ENCODE measurements at regions of chr9 and their contacts with region 1.

Region 1: GRCh38 chr9:347667-348292 is 133.1 kb downstream of the DOCK8 start:
- DNase-seq: peak; percentile 71
- ATAC-seq: peak; percentile 66
- H3K4me3 ChIP-seq: no peak overlapping the region
- H3K27ac ChIP-seq: no peak overlapping the region
- H3K4me1 ChIP-seq: no peaks in the 10 kb centered on the region
- H3K27me3 ChIP-seq: no peaks in the 10 kb centered on the region
- CTCF ChIP-seq: peak; percentile 84

Region 2: GRCh38 chr9:378263-378662 is 30.5 kb after region 1 on chr9:
- CTCF ChIA-PET with region 1: no interaction called
- POLR2A ChIA-PET with region 1: no interaction called
- intact Hi-C with region 1: loop called (anchors 1 kb)
- DNase-seq: no peak
- ATAC-seq: no peak
- H3K4me3 ChIP-seq: no peak overlapping the region
- H3K27ac ChIP-seq: no peak overlapping the region
- H3K4me1 ChIP-seq: no peaks in the 10 kb centered on the region
- H3K27me3 ChIP-seq: no peaks in the 10 kb centered on the region
- CTCF ChIP-seq: no peak

Region 3: GRCh38 chr9:1009101-1009707 is 661.4 kb after region 1 on chr9:
- CTCF ChIA-PET with region 1: no interaction called
- POLR2A ChIA-PET with region 1: no interaction called
- intact Hi-C with region 1: loop called (anchors 5 kb)
- DNase-seq: peak; percentile 90
- ATAC-seq: peak; percentile 97
- H3K4me3 ChIP-seq: no peak overlapping the region
- H3K27ac ChIP-seq: no peak overlapping the region
- H3K4me1 ChIP-seq: no peaks in the 10 kb centered on the region
- H3K27me3 ChIP-seq: no peaks in the 10 kb centered on the region
- CTCF ChIP-seq: peak; percentile 85